ENCODE measurements at regions of chr1 and their contacts with region 1.

Region 1: DNA sequence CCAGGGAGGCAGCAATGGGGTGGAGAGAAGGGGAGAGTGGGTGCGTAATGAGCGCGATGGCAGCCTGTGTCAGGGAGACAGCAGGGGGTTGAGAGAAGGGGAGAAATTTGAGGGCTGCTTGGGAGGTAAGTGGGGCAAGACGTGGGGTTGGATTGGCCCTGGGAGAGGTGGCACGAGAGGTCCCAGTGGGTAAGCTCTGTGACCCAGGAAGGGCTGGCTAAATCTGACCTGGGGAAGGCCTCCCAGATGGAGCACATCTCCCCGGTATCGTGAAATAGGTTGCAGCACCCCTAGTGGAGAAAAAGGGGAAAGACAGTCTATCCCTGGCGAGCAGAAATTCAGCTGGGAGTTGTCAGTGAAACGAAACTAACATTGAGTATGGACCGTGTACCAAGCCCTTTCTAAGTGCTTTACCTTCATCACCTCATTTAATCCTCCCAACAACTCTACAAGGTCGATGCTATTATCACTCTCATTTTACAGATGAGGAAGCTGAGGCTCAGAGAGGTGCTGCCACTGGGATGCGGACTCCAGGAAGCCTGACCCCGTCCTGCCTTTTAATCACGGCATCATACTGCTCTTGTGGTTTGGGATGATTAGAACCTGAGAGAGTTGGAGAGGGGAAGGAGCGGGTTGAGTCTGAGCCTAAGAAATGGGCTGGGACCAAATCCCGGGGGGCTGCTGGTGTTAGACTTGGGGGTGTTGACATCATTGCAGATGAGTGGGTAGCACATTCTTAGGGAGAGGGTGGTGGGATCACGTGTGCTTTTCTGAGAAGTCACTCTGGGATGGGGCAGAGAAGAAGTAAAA is 56.6 kb upstream of the RPL11 start:
- DNase-seq: peak; percentile 82
- H3K4me3 ChIP-seq: peak overlapping the region; percentile 48
- H3K27ac ChIP-seq: peak overlapping the region; percentile 35
- H3K4me1 ChIP-seq: peaks cover 21% of the 10 kb centered on the region
- H3K27me3 ChIP-seq: no peaks in the 10 kb centered on the region
- CTCF ChIP-seq: peak; percentile 90

Region 2: DNA sequence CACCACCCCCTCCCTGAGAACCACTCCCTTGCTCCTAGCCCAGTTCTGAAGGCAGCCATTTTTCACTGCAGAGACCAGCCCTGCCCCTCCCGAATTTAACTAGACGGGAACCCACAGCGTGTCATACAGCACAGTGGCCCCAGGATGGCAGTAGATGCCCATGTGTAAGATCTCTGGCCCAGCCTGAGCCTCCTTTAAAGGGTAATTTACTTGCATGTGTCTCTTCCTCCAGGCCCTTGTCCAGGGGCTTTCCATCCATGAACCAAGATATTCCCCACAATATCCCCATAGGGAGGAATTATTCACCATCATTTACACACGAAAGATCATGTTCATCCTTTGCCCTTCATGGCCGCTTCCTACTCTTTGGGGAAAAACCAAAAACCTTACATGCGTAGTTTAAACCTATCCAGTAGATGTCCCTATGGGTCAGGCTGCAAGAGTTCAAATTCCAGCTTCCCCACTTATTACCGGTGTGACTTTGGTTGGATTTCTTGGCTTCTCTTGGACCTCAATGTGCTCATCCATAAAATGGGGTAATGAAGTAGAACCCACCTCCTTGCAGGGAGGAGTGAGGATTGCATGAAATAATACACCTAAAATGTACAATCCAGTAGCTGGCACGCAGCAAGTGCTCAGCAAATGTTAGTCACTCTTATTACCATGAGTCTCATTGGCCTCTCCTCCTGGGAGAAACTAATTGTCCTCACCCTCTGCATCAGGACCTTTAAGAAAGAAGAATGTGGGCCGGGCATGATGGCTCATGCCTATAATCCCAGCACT is 658.4 kb before region 1 on chr1:
- CTCF ChIA-PET with region 1: no interaction called
- POLR2A ChIA-PET with region 1: no interaction called
- intact Hi-C with region 1: loop called (anchors 10 kb)
- DNase-seq: peak; percentile 90
- H3K4me3 ChIP-seq: no peak overlapping the region
- H3K27ac ChIP-seq: no peak overlapping the region
- H3K4me1 ChIP-seq: peaks cover 16% of the 10 kb centered on the region
- H3K27me3 ChIP-seq: no peaks in the 10 kb centered on the region
- CTCF ChIP-seq: peak; percentile 94

Region 3: DNA sequence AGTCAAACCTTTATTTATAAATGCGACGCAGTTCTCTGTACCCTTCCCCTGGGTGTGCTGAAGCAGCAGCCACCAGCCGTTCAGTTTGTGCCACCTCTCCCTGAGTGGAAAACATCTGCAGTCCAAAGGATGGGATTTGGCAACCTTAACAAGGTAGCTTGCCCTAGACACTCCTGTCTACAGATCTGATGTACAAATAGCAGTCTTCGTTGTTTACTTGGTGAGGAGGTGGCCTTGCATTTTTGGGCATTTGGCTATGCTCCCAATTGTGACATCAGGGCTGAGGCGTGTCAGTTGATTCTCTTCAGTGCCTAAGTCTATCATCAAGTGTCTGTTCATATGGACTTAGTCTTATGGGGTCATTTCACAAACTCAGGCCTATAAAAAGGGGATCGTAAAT is 556.0 kb before region 1 on chr1:
- CTCF ChIA-PET with region 1: no interaction called
- POLR2A ChIA-PET with region 1: no interaction called
- intact Hi-C with region 1: no loop called
- DNase-seq: no peak
- H3K4me3 ChIP-seq: no peak overlapping the region
- H3K27ac ChIP-seq: no peak overlapping the region
- H3K4me1 ChIP-seq: no peaks in the 10 kb centered on the region
- H3K27me3 ChIP-seq: no peaks in the 10 kb centered on the region
- CTCF ChIP-seq: no peak

Region 4: DNA sequence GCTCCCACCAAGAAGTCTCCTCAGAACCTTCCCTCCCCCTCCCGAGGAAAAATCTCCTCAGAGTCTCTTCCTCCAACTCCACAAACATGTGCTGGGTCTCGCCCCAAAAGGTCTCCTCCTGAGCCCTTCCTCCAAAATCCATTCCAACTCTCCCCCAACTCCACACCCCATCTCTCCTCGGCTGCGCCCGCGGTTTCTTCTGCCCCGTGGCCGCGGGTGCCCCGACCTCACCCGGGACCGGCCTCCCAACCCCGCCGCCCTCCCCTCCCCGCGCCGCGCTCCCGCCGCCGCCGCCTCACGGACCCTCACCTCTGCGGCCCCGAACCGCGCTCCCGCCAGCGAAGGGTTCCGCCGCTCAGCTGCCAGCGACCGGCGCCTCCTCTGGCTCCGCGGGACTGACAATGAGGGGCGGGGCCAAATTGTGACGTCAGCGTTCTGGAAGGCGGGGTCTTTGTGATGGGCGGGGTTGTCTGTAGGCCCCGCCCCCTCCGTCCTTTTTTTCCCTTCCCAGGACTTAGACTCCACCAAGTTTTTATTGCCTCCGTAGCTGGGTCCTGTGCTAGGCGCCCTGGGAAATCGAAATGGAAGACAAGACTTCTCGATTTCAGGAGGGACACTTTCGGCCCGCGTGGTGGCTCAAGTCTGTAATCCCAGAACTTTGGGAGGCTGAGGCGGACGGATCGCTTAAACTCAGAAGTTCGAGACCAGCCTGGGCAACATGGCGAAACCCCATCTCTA is 466.4 kb before region 1 on chr1 and contains the start of gene LUZP1:
- CTCF ChIA-PET with region 1: interaction called, 10 read pairs
- POLR2A ChIA-PET with region 1: no interaction called
- intact Hi-C with region 1: no loop called
- DNase-seq: peak; percentile 85
- H3K4me3 ChIP-seq: peak within 1 kb of the TSS; percentile 90
- H3K27ac ChIP-seq: peak within 1 kb of the TSS; percentile 90
- H3K4me1 ChIP-seq: peaks cover 36% of the 10 kb centered on the region
- H3K27me3 ChIP-seq: no peaks in the 10 kb centered on the region
- CTCF ChIP-seq: no peak
- total RNA-seq, gene LUZP1: 32.6 and 34.9 TPM in 2 replicates

Region 5: DNA sequence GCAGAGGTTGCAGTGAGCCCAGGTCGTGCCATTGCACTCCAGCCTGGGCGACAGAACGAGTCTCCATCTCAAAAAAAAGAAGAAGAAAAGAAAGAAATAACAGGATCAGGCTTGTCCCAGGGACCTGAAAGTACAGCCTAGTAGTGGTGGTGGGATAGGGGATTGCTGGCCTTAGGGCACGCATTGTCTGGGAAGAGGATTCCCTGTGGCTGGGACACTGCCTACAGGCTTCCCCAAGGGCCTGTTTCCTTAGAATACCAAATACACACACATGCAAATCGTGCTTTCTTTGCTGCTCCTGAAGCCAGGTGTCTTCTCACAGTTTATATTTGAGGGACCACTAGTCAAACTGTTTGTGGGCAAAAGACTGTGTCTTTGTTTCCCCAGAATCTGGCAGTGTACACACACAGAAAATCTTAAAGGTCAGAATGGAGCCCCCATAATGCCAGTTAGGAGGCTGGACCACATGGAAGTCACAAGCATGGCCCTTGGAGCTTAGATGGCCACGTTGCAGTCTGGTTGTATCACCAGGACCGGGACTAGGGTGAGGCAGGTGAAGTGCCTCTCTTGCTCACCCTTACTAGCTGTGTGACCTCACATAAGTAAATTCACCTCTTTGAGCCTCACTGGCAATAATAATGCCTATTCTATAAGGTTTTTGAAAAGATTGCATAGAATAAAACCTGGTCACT is 138.4 kb before region 1 on chr1:
- CTCF ChIA-PET with region 1: interaction called, 14 read pairs
- POLR2A ChIA-PET with region 1: no interaction called
- intact Hi-C with region 1: loop called (anchors 1 kb)
- DNase-seq: no peak
- H3K4me3 ChIP-seq: no peak overlapping the region
- H3K27ac ChIP-seq: no peak overlapping the region
- H3K4me1 ChIP-seq: no peaks in the 10 kb centered on the region
- H3K27me3 ChIP-seq: no peaks in the 10 kb centered on the region
- CTCF ChIP-seq: no peak

Region 6: DNA sequence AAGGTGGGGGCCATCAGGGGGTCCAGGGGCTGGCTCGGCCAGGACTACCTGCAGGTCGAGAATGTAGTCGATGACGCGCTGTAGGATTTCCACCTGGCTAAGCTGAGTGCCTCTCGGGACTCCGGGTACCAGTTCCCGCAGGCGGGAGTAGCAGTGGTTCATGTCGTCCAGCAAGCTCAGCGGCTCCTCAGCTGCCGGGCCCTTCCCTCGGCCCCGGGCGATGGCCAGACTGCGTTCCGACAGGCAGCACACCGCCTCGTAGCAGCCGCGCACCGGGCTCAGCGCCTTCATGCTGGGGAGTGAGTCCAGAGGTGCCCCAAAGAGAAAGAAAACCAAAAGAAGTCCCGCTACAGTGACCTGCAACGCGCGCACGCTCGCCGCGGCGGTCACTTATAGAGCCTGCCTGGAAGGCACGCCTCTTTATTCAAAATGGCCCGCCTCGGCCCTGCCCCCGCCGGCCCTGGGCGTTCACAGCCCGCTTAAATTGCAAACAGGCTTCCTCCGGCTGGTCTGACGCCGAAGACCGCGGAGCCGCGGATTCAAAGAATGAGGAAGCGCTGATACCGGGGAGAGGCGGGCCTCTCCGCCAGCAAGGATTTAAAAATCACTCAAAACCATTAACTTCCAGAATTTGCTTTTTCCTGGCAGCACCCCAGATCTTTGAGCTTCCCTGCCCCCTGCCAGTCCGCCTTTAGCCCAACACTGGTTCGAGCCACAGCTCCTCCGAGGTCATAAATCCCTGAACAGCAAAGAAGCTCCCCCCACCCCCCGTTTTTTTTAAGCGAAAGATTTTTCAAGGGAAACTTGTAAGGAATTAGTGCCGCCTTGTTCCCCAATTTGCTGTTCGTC is 75.7 kb before region 1 on chr1 and contains the start of gene ID3:
- CTCF ChIA-PET with region 1: interaction called, 36 read pairs
- POLR2A ChIA-PET with region 1: no interaction called
- intact Hi-C with region 1: no loop called
- DNase-seq: peak; percentile 99
- H3K4me3 ChIP-seq: peak within 1 kb of the TSS; percentile 75
- H3K27ac ChIP-seq: peak within 1 kb of the TSS; percentile 99
- H3K4me1 ChIP-seq: peaks cover 70% of the 10 kb centered on the region
- H3K27me3 ChIP-seq: no peaks in the 10 kb centered on the region
- CTCF ChIP-seq: no peak
- total RNA-seq, gene ID3: 102 and 140 TPM in 2 replicates

Region 7: GRCh38 chr1:23790696-23791515 is 155.9 kb after region 1 on chr1 and contains the start of gene LYPLA2:
- CTCF ChIA-PET with region 1: interaction called, 10 read pairs
- POLR2A ChIA-PET with region 1: no interaction called
- intact Hi-C with region 1: no loop called
- DNase-seq: peak; percentile 95
- H3K4me3 ChIP-seq: peak within 1 kb of the TSS; percentile 86
- H3K27ac ChIP-seq: peak within 1 kb of the TSS; percentile 59
- H3K4me1 ChIP-seq: peaks cover 22% of the 10 kb centered on the region
- H3K27me3 ChIP-seq: no peaks in the 10 kb centered on the region
- CTCF ChIP-seq: no peak
- total RNA-seq, gene LYPLA2: 54.5 and 66.2 TPM in 2 replicates

Measured in A673 (cell line).